ENCODE measurements at regions of chr3 and their contacts with region 1.

Region 1: GRCh38 chr3:133040696-133041523 is 2.7 kb downstream of the TMEM108 start:
- DNase-seq: peak in 1 of 2 donors; percentile 76
- H3K4me3 ChIP-seq: no peak overlapping the region
- H3K27ac ChIP-seq: peak overlapping the region in 1 of 2 donors; percentile 8
- H3K4me1 ChIP-seq: peaks cover 0 to 2% of the 10 kb centered on the region in 2 donors
- H3K27me3 ChIP-seq: no peaks in the 10 kb centered on the region
- CTCF ChIP-seq: peak; percentile 41 to 73 (median 46)

Region 2: GRCh38 chr3:133384331-133385027 is 343.6 kb after region 1 on chr3:
- intact Hi-C with region 1: loop called (anchors 5 kb)
- DNase-seq: peak in 1 of 2 donors; percentile 66
- H3K4me3 ChIP-seq: no peak overlapping the region
- H3K27ac ChIP-seq: no peak overlapping the region
- H3K4me1 ChIP-seq: no peaks in the 10 kb centered on the region
- H3K27me3 ChIP-seq: no peaks in the 10 kb centered on the region
- CTCF ChIP-seq: peak; percentile 19 to 58 (median 50)

Region 3: GRCh38 chr3:133426721-133427120 is 385.8 kb after region 1 on chr3:
- intact Hi-C with region 1: loop called (anchors 2 kb)
- DNase-seq: no peak
- H3K4me3 ChIP-seq: no peak overlapping the region
- H3K27ac ChIP-seq: no peak overlapping the region
- H3K4me1 ChIP-seq: peaks cover 0 to 3% of the 10 kb centered on the region in 2 donors
- H3K27me3 ChIP-seq: no peaks in the 10 kb centered on the region
- CTCF ChIP-seq: no peak

Region 4: GRCh38 chr3:133661454-133662277 is 620.8 kb after region 1 on chr3 and contains the start of gene TOPBP1:
- intact Hi-C with region 1: loop called (anchors 10 kb)
- DNase-seq: peak in 1 of 2 donors; percentile 85
- H3K4me3 ChIP-seq: peak within 1 kb of the TSS; percentile 77 to 94
- H3K27ac ChIP-seq: peak within 1 kb of the TSS; percentile 85 to 92
- H3K4me1 ChIP-seq: peaks cover 0 to 8% of the 10 kb centered on the region in 2 donors
- H3K27me3 ChIP-seq: no peaks in the 10 kb centered on the region
- CTCF ChIP-seq: no peak
- total RNA-seq, gene TOPBP1: 10.6 TPM